ENCODE measurements at regions of chr4 and their contacts with region 1.

Region 1: DNA sequence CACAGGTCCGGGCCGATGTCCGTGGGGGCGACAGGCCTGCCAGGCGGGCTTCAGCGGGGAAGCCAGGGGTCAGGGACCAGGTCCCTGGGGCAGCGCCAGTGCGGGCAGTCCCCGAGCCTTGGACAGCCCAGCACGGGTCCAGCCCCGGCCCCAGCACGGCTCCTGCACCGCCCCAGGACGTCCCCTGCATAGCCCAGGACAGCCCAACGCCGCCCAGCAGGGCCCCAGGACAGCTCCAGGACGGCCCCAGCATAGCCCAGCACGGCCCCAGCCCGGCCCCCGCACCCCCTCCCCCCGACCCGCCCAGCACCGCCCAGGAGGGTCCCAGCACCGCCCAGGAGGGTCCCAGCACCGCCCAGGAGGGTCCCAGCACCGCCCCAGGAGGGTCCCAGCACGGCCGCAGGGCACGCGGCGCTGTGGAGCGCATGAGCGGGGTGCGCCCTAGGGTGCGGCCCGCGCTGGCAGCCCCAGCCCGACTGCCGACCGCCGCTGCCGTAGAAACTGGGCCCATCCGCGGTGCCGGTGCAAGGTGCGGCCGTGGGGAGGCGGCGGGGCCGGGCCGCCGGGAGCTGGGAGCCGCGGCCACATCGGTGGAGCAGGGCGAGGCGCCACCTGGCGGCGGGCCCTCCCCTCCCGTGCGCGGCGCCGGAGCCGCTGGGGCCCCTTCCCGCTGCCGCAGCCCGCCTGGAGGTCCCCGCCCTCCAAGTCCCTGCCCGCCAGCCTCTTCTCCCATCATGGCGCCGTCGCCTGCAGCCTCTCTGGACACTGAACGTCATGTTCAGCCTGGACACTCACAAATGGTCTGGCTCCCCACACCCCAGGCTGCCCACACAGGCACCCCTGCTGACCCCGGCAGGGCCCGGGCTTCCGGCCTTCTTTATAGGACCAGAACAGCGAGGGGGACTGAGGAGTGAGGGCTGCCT is 106.8 kb upstream of the NKX1-1 start:
- DNase-seq: peak in 3 of 5 donors; percentile 30 to 67 (median 36)
- ATAC-seq: peak in 3 of 4 donors; percentile 47 to 75 (median 56)
- H3K4me3 ChIP-seq: peak overlapping the region in 8 of 12 donors; percentile 2 to 48 (median 31)
- H3K27ac ChIP-seq: peak overlapping the region in 2 of 12 donors; percentile 5 to 33
- H3K4me1 ChIP-seq: peaks cover 0 to 16% (median 0%) of the 10 kb centered on the region in 12 donors
- H3K27me3 ChIP-seq: peaks cover 2 to 55% (median 19%) of the 10 kb centered on the region in 9 donors
- CTCF ChIP-seq: peak; percentile 35 to 83 (median 58)
- POLR2A ChIP-seq: no peak

Region 2: GRCh38 chr4:1365271-1366178 is 147.5 kb before region 1 on chr4:
- intact Hi-C with region 1: loop called in 1 of 10 experiments (anchors 5 kb)
- DNase-seq: peak in 3 of 5 donors; percentile 15 to 47 (median 18)
- ATAC-seq: no peak
- H3K4me3 ChIP-seq: no peak overlapping the region
- H3K27ac ChIP-seq: no peak overlapping the region
- H3K4me1 ChIP-seq: no peaks in the 10 kb centered on the region
- H3K27me3 ChIP-seq: no peaks in the 10 kb centered on the region
- CTCF ChIP-seq: peak in 1 of 12 donors; percentile 7
- POLR2A ChIP-seq: no peak

Region 3: DNA sequence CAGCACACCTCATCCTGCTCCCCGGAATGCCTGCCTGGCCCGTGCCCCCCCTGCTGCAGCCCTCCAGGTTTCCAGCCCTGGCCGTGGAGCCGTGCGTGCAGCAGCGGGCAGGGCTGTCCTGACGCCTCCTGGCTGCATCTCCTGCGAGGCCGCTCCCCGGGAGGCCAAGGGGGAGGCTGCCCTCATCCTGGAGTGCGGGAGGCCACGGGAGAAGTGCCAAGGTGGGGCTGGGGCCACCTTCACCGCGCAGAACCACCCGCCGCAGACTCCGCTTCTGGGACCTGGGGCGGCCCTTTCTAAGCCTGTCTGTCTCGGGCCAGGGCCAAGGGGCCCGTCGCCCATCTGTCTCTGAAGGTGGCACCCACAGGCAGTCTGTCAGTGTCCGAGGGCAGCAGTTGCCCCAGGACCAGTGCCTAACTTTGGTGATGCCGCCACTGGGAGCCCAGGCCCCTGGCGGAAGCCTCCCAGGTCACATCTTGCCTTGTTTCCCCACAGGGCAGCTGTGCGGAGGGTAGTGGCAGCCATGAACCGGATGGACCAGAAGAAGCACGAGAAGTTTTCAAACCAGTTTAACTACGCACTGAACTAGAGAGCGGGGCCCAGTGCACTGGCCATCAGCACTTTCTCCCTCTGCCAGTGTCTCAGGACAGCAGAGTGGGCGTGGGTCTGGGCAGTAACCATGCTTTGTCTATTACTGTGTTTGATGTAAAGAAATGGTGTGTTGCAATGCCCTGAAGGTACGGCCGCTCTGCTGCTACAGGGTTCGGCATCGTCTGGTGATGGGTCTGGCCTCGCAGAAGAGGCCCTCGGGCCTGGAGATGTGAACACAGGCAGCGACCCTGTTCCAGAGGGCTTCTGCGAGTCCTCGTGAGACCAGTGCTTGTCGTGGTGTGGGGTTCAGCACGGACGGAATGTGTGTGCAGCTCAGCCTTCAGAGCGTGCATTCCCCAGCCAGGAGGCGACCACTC is 127.3 kb before region 1 on chr4:
- intact Hi-C with region 1: no loop called
- DNase-seq: peak in 3 of 5 donors; percentile 20 to 58 (median 20)
- ATAC-seq: no peak
- H3K4me3 ChIP-seq: no peak overlapping the region
- H3K27ac ChIP-seq: no peak overlapping the region
- H3K4me1 ChIP-seq: no peaks in the 10 kb centered on the region
- H3K27me3 ChIP-seq: no peaks in the 10 kb centered on the region
- CTCF ChIP-seq: no peak
- POLR2A ChIP-seq: no peak